ENCODE measurements at regions of chr6 and their contacts with region 1.

Region 1: DNA sequence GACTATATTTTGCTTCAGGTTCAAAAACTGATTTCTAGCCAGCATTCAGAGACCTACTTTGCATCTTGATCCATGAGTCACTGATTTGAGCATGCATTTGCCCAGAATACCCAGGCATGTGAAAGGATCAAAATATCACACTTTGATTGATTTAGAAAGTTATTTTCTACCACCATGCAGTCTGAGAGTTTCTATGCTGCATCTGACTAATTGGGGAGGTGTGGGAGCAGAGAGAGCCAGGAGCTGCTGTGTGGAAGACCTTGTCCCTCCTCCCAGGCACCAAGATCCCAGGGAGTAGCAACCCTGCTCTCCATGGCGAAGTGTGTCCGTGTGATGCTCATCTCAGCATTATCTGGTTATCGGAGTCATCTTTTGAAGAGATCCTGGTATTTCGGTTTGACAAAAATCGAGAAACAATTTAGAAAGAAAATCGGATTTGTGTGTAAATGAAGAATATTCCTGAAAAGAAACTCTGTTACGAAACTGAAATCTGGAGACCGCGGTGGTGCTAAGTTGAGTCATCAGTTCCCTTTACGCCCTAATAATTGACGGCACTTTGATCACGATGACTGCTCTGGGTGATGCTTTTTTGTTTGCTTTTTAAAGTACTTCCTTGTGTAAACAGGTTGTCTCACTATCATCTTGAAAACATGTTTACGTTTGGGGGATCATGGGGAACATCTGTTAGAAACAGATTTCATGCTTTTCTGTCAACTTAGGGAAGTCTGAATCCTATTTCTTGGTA is 193.4 kb downstream of the BACH2 start:
- DNase-seq: peak; percentile 58
- ATAC-seq: peak; percentile 80
- H3K4me3 Mint-ChIP-seq: peak overlapping the region; percentile 43
- H3K27ac Mint-ChIP-seq: peak overlapping the region; percentile 79
- H3K4me1 Mint-ChIP-seq: peaks cover 93% of the 10 kb centered on the region
- H3K27me3 Mint-ChIP-seq: no peaks in the 10 kb centered on the region

Region 2: DNA sequence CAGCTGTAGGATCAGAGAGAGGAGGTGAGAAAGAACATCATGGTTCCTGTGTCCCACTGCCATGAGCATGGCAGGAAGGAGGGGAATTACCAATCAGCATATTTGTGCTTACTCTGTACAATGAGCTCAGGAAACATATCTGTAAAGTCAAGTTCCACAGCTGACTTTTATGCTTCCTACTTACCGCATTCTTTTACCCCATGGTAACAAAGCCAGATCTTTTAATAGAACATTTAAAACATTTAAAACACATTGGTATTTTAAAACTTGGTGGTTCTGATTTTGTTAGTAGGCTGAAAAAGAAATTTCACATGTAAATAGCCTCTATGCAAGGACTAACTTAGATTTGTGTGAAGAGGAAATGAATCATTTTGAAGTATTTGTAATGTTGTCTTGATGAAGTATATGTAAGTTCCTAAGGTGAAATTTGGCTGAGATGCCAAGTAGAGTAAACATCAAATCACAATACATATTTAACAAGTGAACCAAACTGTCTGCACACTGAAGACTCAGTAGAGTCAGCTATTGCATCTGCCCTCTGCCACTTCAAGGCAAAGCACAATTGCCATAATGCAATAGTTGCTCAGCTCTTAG is 94.2 kb before region 1 on chr6:
- CTCF ChIA-PET with region 1: interaction called, 3 read pairs
- POLR2A ChIA-PET with region 1: no interaction called
- intact Hi-C with region 1: loop called in 1 of 2 experiments (anchors 1 kb)
- DNase-seq: peak; percentile 54
- ATAC-seq: peak; percentile 82
- H3K4me3 Mint-ChIP-seq: peak overlapping the region; percentile 18
- H3K27ac Mint-ChIP-seq: peak overlapping the region; percentile 95
- H3K4me1 Mint-ChIP-seq: peaks cover 68% of the 10 kb centered on the region
- H3K27me3 Mint-ChIP-seq: no peaks in the 10 kb centered on the region

Region 3: DNA sequence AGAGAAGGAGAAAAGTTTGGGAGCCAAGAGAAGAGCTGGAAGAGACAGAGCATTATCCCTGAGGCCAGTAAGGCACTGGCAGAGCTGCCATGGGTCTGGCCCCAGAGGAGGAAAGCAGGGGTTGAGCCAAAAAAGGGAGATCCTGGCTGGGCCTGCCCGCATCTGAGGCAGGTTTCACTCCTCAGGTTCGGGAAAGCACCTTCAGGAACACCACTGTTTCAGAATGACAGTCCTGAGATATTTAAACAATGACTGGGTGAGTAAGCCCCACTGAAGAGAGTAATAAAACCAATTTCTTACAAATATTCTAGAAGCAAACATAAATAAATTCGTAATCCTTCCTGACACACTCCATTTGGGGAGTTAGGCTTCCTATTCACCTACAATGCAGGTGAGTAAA is 41.2 kb after region 1 on chr6:
- CTCF ChIA-PET with region 1: interaction called, 3 read pairs
- POLR2A ChIA-PET with region 1: no interaction called
- intact Hi-C with region 1: loop called (anchors 1 kb)
- DNase-seq: peak; percentile 75
- ATAC-seq: peak; percentile 75
- H3K4me3 Mint-ChIP-seq: peak overlapping the region; percentile 32
- H3K27ac Mint-ChIP-seq: peak overlapping the region; percentile 95
- H3K4me1 Mint-ChIP-seq: peaks cover 81% of the 10 kb centered on the region
- H3K27me3 Mint-ChIP-seq: no peaks in the 10 kb centered on the region

Region 4: DNA sequence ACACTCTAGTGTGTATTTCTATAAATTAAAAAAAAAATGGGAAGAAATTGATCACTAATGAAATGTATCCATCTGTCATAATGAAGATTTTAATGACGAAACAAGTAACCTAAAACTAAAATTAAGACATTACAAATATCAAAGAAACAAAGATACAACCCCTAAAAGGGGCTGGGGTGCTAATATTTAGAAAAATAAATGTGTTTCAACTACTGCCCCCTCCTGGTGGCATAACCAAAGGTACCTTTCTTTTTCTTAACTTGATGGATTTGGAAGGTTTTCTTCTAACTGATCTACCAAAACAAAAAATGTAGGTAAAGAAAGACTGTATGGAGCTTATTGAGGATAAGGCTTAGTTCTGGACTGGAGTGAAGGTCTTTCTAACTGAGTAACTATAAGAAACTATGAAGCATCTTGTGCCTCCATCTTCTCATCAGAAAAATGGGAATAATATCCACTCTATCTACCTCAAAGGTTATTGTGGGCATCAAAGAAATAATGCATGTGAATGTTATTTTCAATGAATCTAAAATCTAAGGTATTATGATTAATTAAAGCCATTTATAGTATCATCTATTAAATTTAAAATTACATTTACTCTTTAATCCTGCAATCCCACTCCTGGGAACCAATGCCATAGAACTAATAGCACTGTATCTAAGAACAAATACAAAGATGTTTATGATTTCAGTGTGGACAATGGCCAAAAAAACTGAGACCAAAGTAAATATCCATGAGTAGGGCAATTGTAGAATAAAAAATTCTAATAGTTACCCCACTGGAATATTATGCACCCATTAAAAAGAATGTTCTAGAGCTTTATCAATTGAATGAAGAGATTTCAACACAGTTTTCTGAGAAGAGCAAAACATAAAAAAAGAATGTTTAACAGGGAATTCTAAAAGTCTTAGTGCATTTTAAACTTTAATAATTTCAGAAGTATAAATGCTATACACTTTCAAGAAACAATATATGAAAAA is 76.3 kb after region 1 on chr6:
- CTCF ChIA-PET with region 1: interaction called, 3 read pairs
- POLR2A ChIA-PET with region 1: no interaction called
- intact Hi-C with region 1: loop called in 1 of 2 experiments (anchors 5 kb)
- DNase-seq: peak; percentile 46
- ATAC-seq: no peak
- H3K4me3 Mint-ChIP-seq: no peak overlapping the region
- H3K27ac Mint-ChIP-seq: no peak overlapping the region
- H3K4me1 Mint-ChIP-seq: peaks cover 79% of the 10 kb centered on the region
- H3K27me3 Mint-ChIP-seq: no peaks in the 10 kb centered on the region